ENCODE measurements at regions of chr10 and their contacts with region 1.

Region 1: DNA sequence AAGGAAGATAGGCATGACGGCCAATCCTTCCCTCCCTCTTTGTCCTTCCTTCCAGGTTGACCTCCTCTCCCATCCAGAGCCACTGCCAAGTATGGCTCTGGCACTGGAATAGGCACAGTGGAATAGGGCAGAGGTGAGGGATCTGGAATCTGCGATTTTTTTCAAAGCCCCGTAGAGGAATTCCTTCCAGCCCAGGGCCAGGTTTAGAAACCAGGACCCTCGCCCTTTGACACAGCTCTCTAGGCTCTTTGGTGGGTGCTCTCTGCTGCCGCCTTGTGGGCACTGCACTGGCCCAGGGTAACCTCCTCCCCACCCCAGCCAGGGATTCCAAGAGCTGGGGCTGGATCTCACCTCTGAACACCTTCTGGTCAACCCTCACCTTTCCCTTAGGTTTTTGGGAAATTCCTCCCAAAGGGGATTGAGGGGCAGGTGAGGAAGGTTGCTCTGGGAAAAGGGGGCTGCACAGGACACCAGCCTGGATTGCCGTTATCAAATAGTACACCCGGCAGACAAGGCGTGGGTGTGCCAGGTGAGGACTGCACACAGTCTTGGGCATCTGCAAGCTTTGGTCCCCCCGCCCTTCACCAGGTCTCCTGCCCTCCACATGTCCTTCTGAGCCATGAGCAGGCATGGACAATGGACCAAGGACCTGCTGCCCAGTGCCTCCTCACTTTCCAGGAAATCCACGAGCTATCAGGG is 22.8 kb downstream of the C10orf105 start:
- DNase-seq: peak; percentile 28 to 76
- ATAC-seq: peak; percentile 72 to 94; a peak in 5 of 6 replicates
- H3K4me3 ChIP-seq: no peak overlapping the region
- H3K27ac ChIP-seq: 0 out of 6 replicates have a peak overlapping the region, but pooled peaks of 1 of the 2 experiments have one; percentile 33
- H3K4me1 ChIP-seq: peaks cover 12% of the 10 kb centered on the region
- CTCF ChIP-seq: peak; percentile 83
- EP300 ChIP-seq: no peak
- POLR2A ChIP-seq: no peak
- RAD21 ChIP-seq: peak; percentile 60 to 62

Region 2: DNA sequence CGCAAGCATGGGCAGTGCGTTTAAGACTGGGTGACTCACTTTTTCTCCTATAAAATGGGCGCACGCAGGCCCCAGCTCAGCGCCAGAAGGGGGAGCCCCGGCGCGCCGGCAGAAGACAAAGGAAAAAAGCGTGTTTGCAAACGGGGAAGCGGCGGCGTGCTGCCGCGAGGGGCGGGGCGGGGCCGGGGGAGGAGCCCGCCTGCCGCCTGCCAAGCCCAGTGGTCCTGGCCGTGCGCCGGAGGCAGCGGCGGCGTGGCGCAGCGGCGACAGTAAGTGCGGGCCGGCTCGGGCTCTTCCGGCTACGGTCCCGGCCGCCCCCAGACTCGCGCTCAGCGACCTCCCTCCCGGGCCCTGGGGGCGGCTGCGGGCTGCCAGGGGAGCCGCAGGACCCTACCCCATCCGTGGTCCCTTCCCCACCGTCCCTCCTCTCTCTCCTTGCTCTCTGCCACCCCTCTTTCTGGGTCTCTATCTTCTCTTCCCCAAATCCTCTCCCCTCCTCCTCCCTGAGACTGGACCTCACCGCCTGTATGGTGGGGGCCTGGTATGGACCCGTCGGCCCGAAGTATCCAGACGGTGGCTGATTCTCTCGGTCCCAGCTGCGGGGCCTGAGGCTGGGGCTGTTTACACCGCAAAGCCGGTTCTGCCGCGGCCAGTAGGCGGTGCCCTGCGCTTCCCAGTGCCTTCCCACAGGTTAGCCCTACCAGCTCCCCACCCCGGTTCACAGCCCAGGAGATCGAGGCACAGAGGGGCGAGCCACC is 377.6 kb before region 1 on chr10 and contains the start of gene SLC29A3:
- CTCF ChIA-PET with region 1: interaction called, 133 read pairs
- POLR2A ChIA-PET with region 1: no interaction called
- DNase-seq: peak; percentile 79 to 83
- ATAC-seq: peak; percentile 93 to 96
- H3K4me3 ChIP-seq: peak within 1 kb of the TSS; percentile 78
- H3K27ac ChIP-seq: peak within 1 kb of the TSS; percentile 89 to 96
- H3K4me1 ChIP-seq: peaks cover 14% of the 10 kb centered on the region
- CTCF ChIP-seq: peak; percentile 81
- EP300 ChIP-seq: no peak
- POLR2A ChIP-seq: peak; percentile 73
- RAD21 ChIP-seq: peak; percentile 79 to 81
- polyA plus RNA-seq, gene SLC29A3: 7.2 and 12.6 TPM in 2 replicates

Region 3: DNA sequence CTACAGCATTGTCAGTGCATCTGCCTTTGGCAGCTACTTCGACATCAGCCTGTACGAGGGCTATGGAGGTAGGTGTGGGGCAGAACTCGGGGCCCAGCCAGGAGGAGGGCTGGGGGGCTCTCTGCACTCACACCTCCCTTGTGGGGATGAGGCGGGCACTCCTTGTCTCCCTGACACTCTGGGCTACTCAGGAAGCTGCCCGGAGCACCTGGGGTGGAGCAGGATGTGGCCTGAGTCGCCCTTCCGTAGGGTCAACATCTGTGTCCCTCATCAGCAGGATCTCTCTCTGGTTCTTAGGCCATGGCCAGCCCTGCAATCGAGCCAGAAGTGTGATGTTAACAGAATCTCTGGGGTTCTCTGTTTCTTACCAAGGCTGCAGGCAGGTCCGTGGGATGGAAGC is 17.4 kb before region 1 on chr10:
- CTCF ChIA-PET with region 1: interaction called, 71 read pairs
- POLR2A ChIA-PET with region 1: no interaction called
- DNase-seq: no peak
- ATAC-seq: no peak
- H3K4me3 ChIP-seq: no peak overlapping the region
- H3K27ac ChIP-seq: no peak overlapping the region
- H3K4me1 ChIP-seq: no peaks in the 10 kb centered on the region
- CTCF ChIP-seq: no peak
- EP300 ChIP-seq: no peak
- POLR2A ChIP-seq: no peak
- RAD21 ChIP-seq: no peak

Region 4: GRCh38 chr10:71713135-71714030 is 16.6 kb after region 1 on chr10:
- CTCF ChIA-PET with region 1: interaction called, 112 read pairs
- POLR2A ChIA-PET with region 1: no interaction called
- DNase-seq: no peak
- ATAC-seq: peak; percentile 19 to 58; a peak in 4 of 6 replicates
- H3K4me3 ChIP-seq: no peak overlapping the region
- H3K27ac ChIP-seq: peak overlapping the region; percentile 32 to 74; a peak in 4 of 6 replicates
- H3K4me1 ChIP-seq: peaks cover 19% of the 10 kb centered on the region
- CTCF ChIP-seq: no peak
- EP300 ChIP-seq: no peak
- POLR2A ChIP-seq: no peak
- RAD21 ChIP-seq: no peak

Region 5: DNA sequence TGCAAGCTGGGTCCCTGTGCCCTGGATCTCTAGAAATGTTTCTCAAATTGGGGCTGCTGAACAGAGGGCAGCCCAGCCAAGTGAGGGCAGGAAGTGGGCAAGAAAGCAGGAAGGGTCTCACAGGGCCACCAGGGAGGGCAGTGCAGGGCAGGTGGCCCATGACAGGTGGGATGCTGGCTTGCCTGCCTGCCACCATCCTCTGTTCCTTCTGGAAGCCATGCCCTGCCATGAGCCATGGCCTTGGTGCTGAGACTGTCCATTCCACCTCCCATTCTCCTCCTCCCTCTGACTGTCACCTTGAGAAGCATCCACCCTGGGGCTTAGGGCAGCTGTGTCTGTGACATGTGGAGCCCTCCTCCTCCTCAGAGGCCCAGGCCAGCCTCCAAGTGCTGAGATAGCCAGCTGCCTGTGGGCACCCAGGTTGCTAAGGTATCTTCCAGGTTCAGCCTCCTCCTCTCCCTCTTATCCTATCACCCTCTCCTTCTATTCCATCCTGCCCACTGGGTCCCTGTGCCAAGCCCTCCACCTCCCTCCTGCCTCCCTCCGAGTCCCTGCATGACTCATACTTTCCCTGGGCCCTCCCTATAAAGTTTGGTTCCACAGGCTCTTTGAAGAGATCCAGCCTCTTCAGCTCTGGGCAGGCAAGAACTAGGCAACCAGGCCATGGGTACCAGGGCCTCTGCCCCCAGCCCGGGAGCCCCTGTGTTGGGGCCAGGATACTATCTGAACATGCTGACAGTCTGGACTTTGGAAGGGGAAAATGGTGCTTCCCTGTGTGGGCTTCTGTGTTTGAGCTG is 75.2 kb after region 1 on chr10:
- CTCF ChIA-PET with region 1: interaction called, 42 read pairs
- POLR2A ChIA-PET with region 1: interaction called, 3 read pairs
- DNase-seq: peak; percentile 40 to 57
- ATAC-seq: peak; percentile 2 to 10; a peak in 3 of 6 replicates
- H3K4me3 ChIP-seq: peak overlapping the region; percentile 64; the same call in 2 of the 3 replicates
- H3K27ac ChIP-seq: peak overlapping the region; percentile 79 to 98
- H3K4me1 ChIP-seq: peaks cover 62% of the 10 kb centered on the region
- CTCF ChIP-seq: no peak
- EP300 ChIP-seq: no peak
- POLR2A ChIP-seq: no peak
- RAD21 ChIP-seq: no peak

Region 6: GRCh38 chr10:71835671-71836595 is 139.2 kb after region 1 on chr10:
- CTCF ChIA-PET with region 1: no interaction called
- POLR2A ChIA-PET with region 1: no interaction called
- DNase-seq: no peak
- ATAC-seq: no peak
- H3K4me3 ChIP-seq: no peak overlapping the region
- H3K27ac ChIP-seq: peak overlapping the region in 1 of 2 experiments; percentile 41; a peak in 3 of 6 replicates
- H3K4me1 ChIP-seq: peaks cover 75% of the 10 kb centered on the region
- CTCF ChIP-seq: no peak
- EP300 ChIP-seq: no peak
- POLR2A ChIP-seq: no peak
- RAD21 ChIP-seq: no peak